ENCODE measurements at regions of chr6 and their contacts with region 1.

Region 1: DNA sequence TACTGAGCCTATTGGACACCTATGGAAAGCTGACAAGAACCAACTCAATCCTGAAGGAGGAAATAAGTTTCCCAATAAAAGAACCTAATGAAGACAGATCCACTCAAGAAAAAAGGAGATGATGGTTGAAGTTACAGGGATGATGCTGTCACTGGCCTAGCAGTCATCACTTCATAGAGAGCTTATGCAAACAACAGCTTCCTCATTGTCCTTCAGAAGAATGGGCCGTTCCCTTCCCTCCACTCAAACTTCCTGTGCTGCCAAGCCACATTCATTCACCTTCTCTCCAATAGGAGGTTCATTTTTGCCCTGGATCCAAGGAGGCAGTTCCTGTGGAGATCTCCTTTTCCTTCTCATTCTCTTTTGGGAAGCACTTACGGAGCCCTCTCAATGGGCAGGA is 13.8 kb upstream of the PM20D2 start:
- DNase-seq: no peak
- H3K4me3 ChIP-seq: no peak overlapping the region
- H3K27ac ChIP-seq: no peak overlapping the region
- H3K4me1 ChIP-seq: no peaks in the 10 kb centered on the region
- CTCF ChIP-seq: no peak

Region 2: DNA sequence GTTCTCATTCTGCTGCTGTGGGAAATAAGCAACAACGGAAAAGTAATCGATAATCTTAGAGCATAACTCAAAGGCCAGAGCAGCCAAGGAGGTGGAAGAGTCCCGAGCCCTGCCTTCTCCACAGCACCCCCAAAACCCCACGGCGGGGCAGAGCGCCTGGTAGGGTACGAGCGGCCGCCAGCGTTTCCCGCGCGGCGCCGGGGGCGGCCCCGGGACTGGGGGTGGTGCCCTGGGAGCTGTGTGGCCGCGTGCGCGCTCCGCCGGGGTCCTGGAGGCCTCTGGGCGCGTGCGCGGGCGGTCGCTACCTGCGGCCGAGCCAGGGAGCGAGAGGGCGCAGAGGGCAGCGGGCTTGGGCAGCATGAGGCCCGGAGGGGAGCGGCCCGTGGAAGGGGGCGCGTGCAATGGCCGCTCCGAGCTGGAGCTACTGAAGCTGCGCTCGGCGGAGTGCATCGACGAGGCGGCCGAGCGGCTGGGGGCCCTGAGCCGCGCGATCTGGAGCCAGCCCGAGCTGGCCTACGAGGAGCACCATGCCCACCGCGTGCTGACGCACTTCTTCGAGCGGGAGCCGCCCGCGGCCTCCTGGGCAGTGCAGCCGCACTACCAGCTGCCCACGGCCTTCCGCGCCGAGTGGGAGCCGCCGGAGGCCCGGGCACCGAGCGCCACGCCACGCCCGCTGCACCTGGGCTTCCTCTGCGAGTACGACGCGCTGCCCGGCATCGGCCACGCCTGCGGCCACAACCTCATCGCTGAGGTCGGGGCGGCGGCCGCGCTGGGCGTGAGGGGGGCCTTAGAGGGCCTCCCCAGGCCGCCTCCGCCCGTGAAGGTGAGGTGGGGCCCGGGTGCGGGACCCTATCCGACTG is 14.0 kb after region 1 on chr6 and contains the start of gene PM20D2:
- CTCF ChIA-PET with region 1: interaction called, 3 read pairs
- POLR2A ChIA-PET with region 1: interaction called, 10 read pairs
- intact Hi-C with region 1: no loop called
- DNase-seq: peak; percentile 86
- H3K4me3 ChIP-seq: peak within 1 kb of the TSS; percentile 76
- H3K27ac ChIP-seq: peak within 1 kb of the TSS; percentile 76
- H3K4me1 ChIP-seq: peaks cover 41% of the 10 kb centered on the region
- CTCF ChIP-seq: no peak
- total RNA-seq, gene PM20D2: 33.1 and 35.1 TPM in 2 replicates

Region 3: GRCh38 chr6:89840538-89840937 is 708.5 kb after region 1 on chr6:
- CTCF ChIA-PET with region 1: no interaction called
- POLR2A ChIA-PET with region 1: interaction called, 11 read pairs
- intact Hi-C with region 1: no loop called
- DNase-seq: no peak
- H3K4me3 ChIP-seq: no peak overlapping the region
- H3K27ac ChIP-seq: no peak overlapping the region
- H3K4me1 ChIP-seq: peaks cover 9% of the 10 kb centered on the region
- CTCF ChIP-seq: no peak